ENCODE measurements at regions of chr9 and their contacts with region 1.

Region 1: DNA sequence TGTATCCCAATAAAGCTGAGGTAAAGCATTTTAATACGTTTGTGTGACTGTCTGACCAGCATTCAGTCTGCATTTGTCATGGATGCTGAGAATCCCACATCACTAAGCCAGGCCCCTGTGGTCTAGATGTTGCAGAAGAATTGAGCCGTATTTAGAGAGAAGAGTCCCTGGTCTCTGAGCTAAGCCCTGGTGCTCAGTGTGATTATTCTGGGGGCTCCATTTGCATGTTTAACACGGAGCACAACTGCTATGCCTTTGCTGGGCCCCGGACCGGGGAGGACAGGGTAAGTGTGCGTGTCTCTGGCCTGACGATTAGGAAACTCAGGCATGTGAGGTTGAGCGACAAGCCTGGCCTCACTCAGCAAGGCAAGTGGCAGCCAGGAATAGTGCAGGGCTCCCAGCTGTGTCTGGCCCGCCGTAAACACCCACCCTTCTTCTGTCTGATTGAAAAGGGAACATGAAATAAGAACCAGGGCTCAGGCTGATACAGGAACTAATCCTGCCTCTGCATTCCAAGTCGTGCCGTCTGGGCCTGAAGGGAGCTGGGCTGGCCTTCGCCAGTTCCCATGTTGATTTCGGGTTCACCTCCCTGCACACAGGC is 22.3 kb downstream of the FAM78A start:
- DNase-seq: no peak
- ATAC-seq: peak; percentile 12; the same call in 1 of the 2 replicates
- H3K4me3 Mint-ChIP-seq: no peak overlapping the region
- H3K27ac Mint-ChIP-seq: peak overlapping the region; percentile 57
- H3K4me1 Mint-ChIP-seq: peaks cover 6% of the 10 kb centered on the region
- H3K27me3 Mint-ChIP-seq: no peaks in the 10 kb centered on the region
- CTCF ChIP-seq: no peak

Region 2: GRCh38 chr9:131138676-131139075 is 115.3 kb before region 1 on chr9:
- CTCF ChIA-PET with region 1: no interaction called
- POLR2A ChIA-PET with region 1: no interaction called
- DNase-seq: no peak
- ATAC-seq: no peak
- H3K4me3 Mint-ChIP-seq: no peak overlapping the region
- H3K27ac Mint-ChIP-seq: no peak overlapping the region
- H3K4me1 Mint-ChIP-seq: no peaks in the 10 kb centered on the region
- H3K27me3 Mint-ChIP-seq: no peaks in the 10 kb centered on the region
- CTCF ChIP-seq: no peak

Region 3: DNA sequence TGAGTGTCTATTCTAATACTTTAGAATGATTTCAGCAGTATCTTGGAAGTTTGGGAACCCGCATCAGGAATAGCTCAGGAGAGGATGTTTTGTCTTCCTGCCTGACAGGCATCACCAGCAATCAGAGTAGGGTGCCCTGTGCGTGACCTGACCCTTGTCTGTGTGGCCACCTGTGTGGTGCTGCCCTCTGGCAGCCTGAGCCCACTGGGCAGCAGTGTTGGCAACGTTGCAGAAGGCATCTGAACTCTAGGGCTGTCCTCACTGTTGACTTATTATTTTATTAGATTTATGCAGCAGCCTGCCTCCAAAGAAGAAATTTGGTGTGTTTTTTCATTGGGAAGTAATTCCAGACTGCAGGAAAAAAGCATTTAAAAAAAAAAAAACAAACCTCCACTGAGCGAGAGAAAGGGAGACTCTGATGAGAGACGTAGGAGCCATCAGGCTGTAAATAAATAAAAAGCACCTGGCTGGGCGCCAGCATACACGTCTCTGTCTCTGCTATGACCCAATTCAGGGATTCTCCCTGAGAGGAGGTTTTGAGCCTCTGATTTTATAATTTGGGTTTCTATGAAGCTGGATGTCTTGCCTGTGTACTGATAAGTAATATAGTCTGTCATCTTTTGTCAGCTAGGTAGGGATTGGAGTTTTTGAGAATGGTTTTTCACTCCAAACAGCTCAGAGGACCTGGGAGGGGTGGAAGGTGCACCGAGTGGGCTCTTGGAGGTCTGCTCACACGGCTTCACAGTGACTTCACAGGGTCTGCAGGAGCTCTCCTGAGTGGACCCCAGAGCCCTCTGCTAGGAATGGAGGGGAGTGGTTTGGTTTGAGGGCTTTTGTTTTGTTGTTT is 26.7 kb before region 1 on chr9:
- CTCF ChIA-PET with region 1: no interaction called
- POLR2A ChIA-PET with region 1: no interaction called
- DNase-seq: no peak
- ATAC-seq: peak; percentile 51
- H3K4me3 Mint-ChIP-seq: peak overlapping the region; percentile 27
- H3K27ac Mint-ChIP-seq: peak overlapping the region; percentile 81
- H3K4me1 Mint-ChIP-seq: peaks cover 30% of the 10 kb centered on the region
- H3K27me3 Mint-ChIP-seq: no peaks in the 10 kb centered on the region
- CTCF ChIP-seq: no peak

Region 4: DNA sequence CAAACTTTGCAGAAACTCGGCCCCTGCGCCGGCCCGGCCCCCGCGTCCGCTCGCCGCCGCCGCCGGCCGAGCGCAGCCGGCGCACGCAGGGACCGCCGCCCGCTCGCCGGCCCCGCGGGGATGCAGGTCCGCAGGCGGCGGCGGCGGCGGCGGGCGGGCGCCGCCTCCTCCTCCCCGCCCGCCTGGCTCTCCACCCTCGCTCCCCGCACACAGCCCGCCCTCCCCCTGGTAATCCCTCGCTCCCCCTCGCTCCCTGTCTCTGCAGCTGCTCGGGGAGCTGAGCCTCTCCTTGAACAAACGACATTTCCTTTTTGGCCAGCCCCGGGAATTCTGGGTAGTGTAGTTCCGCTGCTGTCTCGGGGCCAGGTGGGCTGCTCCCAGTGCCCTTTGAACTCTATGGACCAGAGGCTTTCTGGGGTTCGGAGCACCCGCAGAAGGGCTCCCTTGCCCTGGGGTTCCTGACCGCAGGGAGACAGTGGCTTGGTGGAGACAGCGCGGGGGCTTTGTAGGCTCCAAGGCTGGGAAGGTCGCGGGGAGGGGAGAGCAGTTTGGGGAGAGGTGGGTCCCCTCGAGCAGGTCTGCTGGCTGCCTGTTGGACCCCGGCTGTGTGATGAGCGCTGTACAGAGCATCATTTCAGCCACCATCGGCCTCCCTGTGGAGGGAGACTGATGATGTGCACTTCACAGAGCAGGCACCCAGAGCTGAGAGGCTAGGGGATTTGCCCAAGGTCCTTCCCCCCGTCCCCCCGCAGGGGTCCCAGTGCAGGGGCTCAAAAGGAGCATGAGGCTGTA is 24.1 kb after region 1 on chr9:
- CTCF ChIA-PET with region 1: interaction called, 10 read pairs
- POLR2A ChIA-PET with region 1: no interaction called
- DNase-seq: peak; percentile 86
- ATAC-seq: peak; percentile 77
- H3K4me3 Mint-ChIP-seq: peak overlapping the region; percentile 71
- H3K27ac Mint-ChIP-seq: no peak overlapping the region
- H3K4me1 Mint-ChIP-seq: peaks cover 27% of the 10 kb centered on the region
- H3K27me3 Mint-ChIP-seq: peaks cover 31% of the 10 kb centered on the region
- CTCF ChIP-seq: no peak